ENCODE measurements at regions of chr1 and their contacts with region 1.

Region 1: GRCh38 chr1:202315576-202316168 is 26.1 kb downstream of the UBE2T start:
- DNase-seq: peak; percentile 87
- ATAC-seq: peak; percentile 88
- H3K4me3 Mint-ChIP-seq: no peak overlapping the region
- H3K27ac Mint-ChIP-seq: no peak overlapping the region
- H3K4me1 Mint-ChIP-seq: peaks cover 7% of the 10 kb centered on the region
- H3K27me3 Mint-ChIP-seq: peaks cover 1% of the 10 kb centered on the region
- CTCF ChIP-seq: peak; percentile 85

Region 2: GRCh38 chr1:201828820-201829774 is 486.6 kb before region 1 on chr1 and contains the start of gene IPO9:
- CTCF ChIA-PET with region 1: no interaction called
- POLR2A ChIA-PET with region 1: no interaction called
- intact Hi-C with region 1: no loop called
- DNase-seq: peak; percentile 98
- ATAC-seq: peak; percentile 96
- H3K4me3 Mint-ChIP-seq: peak within 1 kb of the TSS; percentile 95
- H3K27ac Mint-ChIP-seq: peak within 1 kb of the TSS; percentile 99
- H3K4me1 Mint-ChIP-seq: peaks cover 39% of the 10 kb centered on the region
- H3K27me3 Mint-ChIP-seq: no peaks in the 10 kb centered on the region
- CTCF ChIP-seq: peak; percentile 98
- total RNA-seq, gene IPO9: 64.6 to 67.5 TPM

Region 3: GRCh38 chr1:202184750-202185460 is 130.8 kb before region 1 on chr1:
- CTCF ChIA-PET with region 1: interaction called, 27 read pairs
- POLR2A ChIA-PET with region 1: no interaction called
- intact Hi-C with region 1: no loop called
- DNase-seq: peak; percentile 80
- ATAC-seq: peak; percentile 62
- H3K4me3 Mint-ChIP-seq: no peak overlapping the region
- H3K27ac Mint-ChIP-seq: no peak overlapping the region
- H3K4me1 Mint-ChIP-seq: peaks cover 14% of the 10 kb centered on the region
- H3K27me3 Mint-ChIP-seq: no peaks in the 10 kb centered on the region
- CTCF ChIP-seq: peak; percentile 89

Region 4: GRCh38 chr1:202213361-202214088 is 102.1 kb before region 1 on chr1:
- CTCF ChIA-PET with region 1: interaction called, 11 read pairs
- POLR2A ChIA-PET with region 1: no interaction called
- intact Hi-C with region 1: no loop called
- DNase-seq: no peak
- ATAC-seq: peak; percentile 68
- H3K4me3 Mint-ChIP-seq: peak overlapping the region; percentile 49
- H3K27ac Mint-ChIP-seq: no peak overlapping the region
- H3K4me1 Mint-ChIP-seq: peaks cover 5% of the 10 kb centered on the region
- H3K27me3 Mint-ChIP-seq: peaks cover 38% of the 10 kb centered on the region
- CTCF ChIP-seq: no peak

Region 5: GRCh38 chr1:202274611-202275010 is 41.1 kb before region 1 on chr1:
- CTCF ChIA-PET with region 1: interaction called, 94 read pairs
- POLR2A ChIA-PET with region 1: no interaction called
- intact Hi-C with region 1: loop called (anchors 2 kb)
- DNase-seq: peak; percentile 76
- ATAC-seq: peak; percentile 55
- H3K4me3 Mint-ChIP-seq: no peak overlapping the region
- H3K27ac Mint-ChIP-seq: no peak overlapping the region
- H3K4me1 Mint-ChIP-seq: no peaks in the 10 kb centered on the region
- H3K27me3 Mint-ChIP-seq: peaks cover 2% of the 10 kb centered on the region
- CTCF ChIP-seq: peak; percentile 58

Region 6: DNA sequence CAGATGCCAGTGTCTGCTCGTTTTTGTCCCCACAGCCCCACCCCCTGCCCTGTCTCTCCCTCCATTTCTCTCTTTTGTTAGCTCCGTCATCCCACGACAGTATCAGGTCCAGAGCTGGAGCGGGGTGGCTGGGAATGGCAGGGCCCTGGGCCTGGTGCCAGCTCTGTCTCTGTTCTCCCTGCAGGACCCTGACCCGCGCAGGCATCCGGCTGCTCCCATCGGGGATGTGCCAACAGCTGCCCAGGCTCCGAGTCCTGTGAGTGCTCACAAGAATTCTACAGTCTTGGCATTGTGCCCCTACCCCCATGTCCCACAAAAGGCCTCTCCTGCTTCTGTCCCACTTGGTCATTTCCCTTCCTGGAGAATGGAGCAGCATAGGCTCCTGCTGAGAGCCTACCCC is 11.3 kb before region 1 on chr1:
- CTCF ChIA-PET with region 1: interaction called, 13 read pairs
- POLR2A ChIA-PET with region 1: no interaction called
- intact Hi-C with region 1: no loop called
- DNase-seq: no peak
- ATAC-seq: no peak
- H3K4me3 Mint-ChIP-seq: no peak overlapping the region
- H3K27ac Mint-ChIP-seq: no peak overlapping the region
- H3K4me1 Mint-ChIP-seq: no peaks in the 10 kb centered on the region
- H3K27me3 Mint-ChIP-seq: no peaks in the 10 kb centered on the region
- CTCF ChIP-seq: no peak

Region 7: DNA sequence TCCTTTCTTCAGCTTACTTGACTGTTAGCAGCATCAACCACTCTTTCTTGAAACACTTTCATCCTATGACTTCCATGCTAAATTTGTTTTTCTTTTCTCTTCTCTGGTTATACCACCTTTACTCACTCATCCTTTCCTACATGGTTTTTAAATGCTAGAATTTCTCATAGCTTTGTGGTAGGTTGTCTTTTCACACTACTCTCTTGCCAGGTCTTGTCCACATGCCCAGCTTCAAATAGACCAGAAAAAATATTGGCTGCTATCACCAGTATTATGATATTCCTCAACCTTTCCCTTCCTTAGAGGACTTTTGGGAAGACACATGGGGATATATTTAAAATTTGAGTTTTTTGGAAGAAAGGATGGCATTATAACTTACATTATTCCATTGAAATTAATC is 81.6 kb after region 1 on chr1:
- CTCF ChIA-PET with region 1: no interaction called
- POLR2A ChIA-PET with region 1: no interaction called
- intact Hi-C with region 1: no loop called
- DNase-seq: no peak
- ATAC-seq: no peak
- H3K4me3 Mint-ChIP-seq: no peak overlapping the region
- H3K27ac Mint-ChIP-seq: no peak overlapping the region
- H3K4me1 Mint-ChIP-seq: peaks cover 18% of the 10 kb centered on the region
- H3K27me3 Mint-ChIP-seq: no peaks in the 10 kb centered on the region
- CTCF ChIP-seq: no peak

Region 8: GRCh38 chr1:202716654-202717053 is 401.0 kb after region 1 on chr1:
- CTCF ChIA-PET with region 1: interaction called, 11 read pairs
- POLR2A ChIA-PET with region 1: no interaction called
- intact Hi-C with region 1: no loop called
- DNase-seq: no peak
- ATAC-seq: no peak
- H3K4me3 Mint-ChIP-seq: no peak overlapping the region
- H3K27ac Mint-ChIP-seq: no peak overlapping the region
- H3K4me1 Mint-ChIP-seq: peaks cover 4% of the 10 kb centered on the region
- H3K27me3 Mint-ChIP-seq: peaks cover 17% of the 10 kb centered on the region
- CTCF ChIP-seq: no peak

Measured in activated CD8-positive, alpha-beta T cell treated with anti-CD3 and anti-CD28 coated beads for 36 hours (primary cell).